ENCODE measurements at regions of chr17 and their contacts with region 1.

Region 1: DNA sequence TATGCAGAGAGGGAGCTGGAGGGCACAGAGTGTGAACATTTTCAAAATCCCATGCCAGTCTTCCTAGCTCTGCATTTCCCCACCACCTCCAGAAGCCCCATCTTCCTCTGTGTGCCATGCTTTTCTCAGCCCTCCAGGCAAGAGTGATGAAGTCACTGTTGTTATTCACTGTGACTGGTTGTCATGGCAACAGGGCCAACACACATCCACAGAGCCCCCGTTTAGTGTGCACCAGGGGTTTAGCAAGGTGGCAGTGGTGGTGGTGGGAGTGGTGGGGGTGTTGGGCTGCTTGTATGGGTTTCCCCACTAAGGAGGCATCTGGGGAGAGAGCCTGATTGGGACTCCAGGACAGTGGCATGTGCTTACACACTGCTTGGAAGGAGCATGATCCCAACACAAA is 309.9 kb upstream of the ASIC2 start:
- DNase-seq: no peak
- ATAC-seq: no peak
- H3K4me3 ChIP-seq: no peak overlapping the region
- H3K27ac ChIP-seq: no peak overlapping the region
- H3K4me1 ChIP-seq: no peaks in the 10 kb centered on the region
- H3K27me3 ChIP-seq: peaks cover 0 to 29% (median 0%) of the 10 kb centered on the region in 9 donors
- CTCF ChIP-seq: no peak
- POLR2A ChIP-seq: no peak

Region 2: DNA sequence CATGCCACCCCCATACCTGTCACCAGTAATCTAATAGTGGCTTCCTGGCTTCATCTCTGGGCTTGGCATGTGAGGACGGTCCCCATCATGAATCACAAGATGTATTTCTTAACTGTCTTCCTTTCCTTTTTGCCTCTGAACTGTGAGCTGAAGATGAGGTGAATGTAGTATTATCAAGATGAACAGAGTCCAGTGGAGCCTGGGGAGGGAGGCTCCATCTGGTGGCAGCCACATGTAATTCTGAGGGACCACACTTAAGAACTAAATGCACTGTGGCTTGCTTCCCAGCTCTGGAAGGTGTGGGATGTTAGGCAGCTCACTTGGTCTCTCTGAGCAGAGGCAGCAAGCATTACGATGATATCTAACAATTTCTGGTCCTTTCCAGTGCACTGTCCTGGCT is 45.0 kb after region 1 on chr17:
- intact Hi-C with region 1: loop called in 1 of 10 experiments (anchors 10 kb)
- DNase-seq: no peak
- ATAC-seq: no peak
- H3K4me3 ChIP-seq: no peak overlapping the region
- H3K27ac ChIP-seq: no peak overlapping the region
- H3K4me1 ChIP-seq: peaks cover 0 to 8% (median 0%) of the 10 kb centered on the region in 12 donors
- H3K27me3 ChIP-seq: peaks cover 0 to 25% (median 3%) of the 10 kb centered on the region in 9 donors
- CTCF ChIP-seq: peak in 9 of 12 donors; percentile 12 to 52 (median 35)
- POLR2A ChIP-seq: no peak